ENCODE measurements at regions of chr16 and their contacts with region 1.

Region 1: GRCh38 chr16:22001591-22001990 is 675 bp upstream of the PDZD9 start:
- DNase-seq: no peak
- CTCF ChIP-seq: no peak

Region 2: DNA sequence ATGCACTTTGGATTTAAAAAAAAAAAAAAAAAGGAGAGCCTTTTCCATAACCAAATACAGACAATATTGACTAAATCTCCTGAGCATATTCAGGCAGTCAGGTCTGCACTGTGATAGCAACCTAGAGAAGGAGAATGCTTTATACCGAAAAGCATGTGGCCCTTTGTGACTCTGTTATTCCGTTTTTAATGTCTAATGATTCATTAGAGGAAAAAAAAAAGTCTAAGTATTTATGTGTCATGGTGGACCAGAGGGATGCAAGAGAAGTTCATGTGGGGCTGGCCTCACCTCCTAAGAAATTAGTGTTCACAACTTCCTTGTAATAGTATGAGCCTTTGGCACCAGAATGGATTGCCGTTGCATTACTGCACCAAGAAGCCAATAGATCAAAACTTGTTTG is 79.5 kb after region 1 on chr16:
- in situ Hi-C with region 1: loop called (anchors 5 kb)
- DNase-seq: no peak
- CTCF ChIP-seq: no peak

Region 3: DNA sequence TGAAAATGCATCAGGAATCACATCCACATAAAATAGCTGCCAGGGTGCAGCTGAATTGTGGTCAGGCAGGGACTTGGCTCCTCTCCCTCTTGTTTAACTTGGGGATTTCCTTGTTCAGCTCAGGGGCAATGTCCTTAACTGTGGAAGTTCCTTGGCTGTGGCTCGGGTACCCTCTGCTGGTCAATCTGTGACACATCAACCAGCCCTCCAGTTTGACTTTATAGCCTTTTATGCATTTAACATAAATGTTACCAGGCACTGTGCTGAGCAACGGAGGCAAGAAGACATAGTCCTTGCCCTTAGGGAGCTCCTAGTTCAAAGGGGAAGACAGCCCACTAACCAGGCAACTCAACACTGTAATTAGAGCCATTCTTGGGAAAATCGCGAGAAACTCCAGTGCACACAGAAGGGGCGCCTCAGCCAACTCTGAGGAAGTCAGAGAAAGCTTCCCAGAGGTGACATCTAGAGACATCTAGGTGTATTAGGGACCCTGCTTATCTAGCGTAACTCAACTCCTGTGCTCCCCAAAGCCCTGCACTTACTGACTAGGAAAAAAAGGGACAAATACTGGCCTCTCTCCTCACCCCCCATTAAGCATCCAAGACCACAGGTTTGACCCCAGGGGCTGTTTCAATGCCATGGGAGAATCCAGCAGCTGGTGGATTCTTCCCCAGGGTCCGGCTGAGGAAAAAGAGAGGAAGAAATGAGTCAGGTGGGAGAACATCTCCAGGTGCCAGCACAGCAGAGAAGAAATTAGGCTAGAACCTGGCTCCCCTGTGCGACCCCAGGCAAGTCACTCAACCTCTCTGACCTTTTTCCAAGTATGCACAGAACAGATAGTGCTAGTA is 187.2 kb after region 1 on chr16:
- in situ Hi-C with region 1: loop called (anchors 10 kb)
- DNase-seq: peak; percentile 65
- CTCF ChIP-seq: peak; percentile 82